Activated CD4-positive, alpha-beta T cell treated with anti-CD3 and anti-CD28 coated beads, Interleukin-2, amount 10 ng/mL, durations not matched to agents 24 days and 14 days (primary cell): ENCODE measurements at regions of chr7 and their contacts with region 1.

Region 1: GRCh38 chr7:100372256-100372655 is 1.0 kb upstream of the PILRA start:
- DNase-seq: no peak
- H3K4me3 Mint-ChIP-seq: no peak overlapping the region
- H3K27ac Mint-ChIP-seq: peak overlapping the region; percentile 76
- H3K4me1 Mint-ChIP-seq: peaks cover 22% of the 10 kb centered on the region
- H3K27me3 Mint-ChIP-seq: no peaks in the 10 kb centered on the region

Region 2: DNA sequence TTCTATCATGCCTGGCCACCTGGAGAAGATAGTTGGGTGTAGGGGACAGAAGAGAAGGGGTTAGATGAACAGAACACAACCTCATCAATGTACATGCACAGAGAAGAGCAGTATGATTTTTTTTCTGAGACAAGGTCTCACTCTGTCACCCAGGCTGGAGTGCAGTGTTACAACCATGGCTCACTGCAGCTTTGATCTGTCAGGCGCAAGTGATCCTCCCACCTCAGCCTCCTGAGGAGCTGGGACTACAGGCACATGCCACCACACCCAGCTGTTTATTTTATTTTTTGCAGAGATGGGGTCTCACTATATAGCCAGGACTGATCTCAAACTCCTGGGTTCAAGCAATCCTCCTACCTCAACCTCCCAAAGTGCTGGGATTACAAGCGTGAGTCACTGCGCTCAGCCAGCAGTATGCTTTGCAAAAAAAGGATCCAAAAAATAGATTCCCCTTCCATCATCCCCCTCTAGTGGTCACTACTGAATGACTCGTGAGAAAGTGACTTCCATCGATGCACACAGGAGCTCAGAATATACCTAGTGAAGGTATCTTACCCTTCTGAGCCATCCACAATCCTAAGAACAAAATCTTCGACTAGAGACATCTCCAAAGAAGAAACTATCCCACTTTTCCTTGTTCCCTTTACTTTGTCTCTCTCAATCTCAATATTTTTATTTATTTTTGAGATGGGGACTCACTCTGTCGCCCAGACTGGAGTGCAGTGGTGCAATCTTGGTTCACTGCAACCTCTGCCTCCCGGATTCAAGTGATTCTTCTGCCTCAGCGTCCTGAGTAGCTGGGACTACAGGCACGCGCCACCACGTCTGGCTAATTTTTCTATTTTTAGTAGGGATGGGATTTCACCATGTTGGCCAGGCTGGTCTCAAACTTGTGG is 35.3 kb after region 1 on chr7:
- intact Hi-C with region 1: loop called (anchors 2 kb)
- DNase-seq: peak; percentile 85
- H3K4me3 Mint-ChIP-seq: no peak overlapping the region
- H3K27ac Mint-ChIP-seq: no peak overlapping the region
- H3K4me1 Mint-ChIP-seq: no peaks in the 10 kb centered on the region
- H3K27me3 Mint-ChIP-seq: peaks cover 25% of the 10 kb centered on the region